Activated CD4-positive, alpha-beta memory T cell treated with anti-CD3 and anti-CD28 coated beads for 36 hours (primary cell): ENCODE measurements at regions of chr18 and their contacts with region 1.

Region 1: DNA sequence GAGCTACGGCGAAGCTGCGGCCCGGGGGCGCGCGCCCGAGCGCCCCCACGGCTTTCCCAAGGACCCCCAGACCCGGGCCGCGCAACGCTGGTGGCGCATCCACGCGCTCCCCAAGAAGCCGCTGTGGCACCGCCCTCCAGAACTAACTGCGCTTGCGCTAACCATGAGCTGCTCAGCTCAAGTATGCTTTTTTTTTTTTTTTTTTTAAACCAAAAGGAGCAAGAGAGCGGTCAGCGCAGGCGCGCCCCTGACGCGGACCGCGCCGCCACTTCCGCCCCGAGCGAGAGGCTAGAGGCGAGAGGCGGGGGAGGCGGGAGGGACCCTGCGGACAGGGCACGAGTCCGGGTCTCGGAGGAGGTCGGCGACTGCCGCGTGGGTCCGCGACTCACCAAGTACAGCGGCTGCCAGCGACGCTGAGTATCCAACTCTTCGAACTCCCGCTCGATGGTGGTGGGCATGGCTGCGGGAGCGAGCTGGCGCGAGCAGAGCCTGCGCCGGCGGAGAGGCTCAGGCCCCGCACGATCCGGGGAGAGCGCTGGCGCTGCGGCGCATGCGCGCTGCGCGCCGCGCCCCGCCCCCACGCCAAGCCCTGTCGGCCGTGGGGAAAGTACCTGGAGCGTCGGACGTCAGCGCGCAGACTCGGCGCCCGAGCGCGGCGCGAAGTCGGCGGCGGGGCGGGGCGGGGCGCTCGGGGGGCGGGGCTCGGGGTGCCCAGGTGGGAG is at the start of gene PTPN2:
- DNase-seq: peak; percentile 94
- H3K4me3 Mint-ChIP-seq: peak within 1 kb of the TSS; percentile 78
- H3K27ac Mint-ChIP-seq: peak within 1 kb of the TSS; percentile 92
- H3K4me1 Mint-ChIP-seq: peaks cover 56% of the 10 kb centered on the region
- H3K27me3 Mint-ChIP-seq: no peaks in the 10 kb centered on the region
- total RNA-seq, gene PTPN2: 68.8 to 73.3 TPM

Region 2: GRCh38 chr18:12744103-12744502 is 139.7 kb before region 1 on chr18:
- CTCF ChIA-PET with region 1: interaction called, 15 read pairs
- POLR2A ChIA-PET with region 1: interaction called, 4 read pairs
- intact Hi-C with region 1: no loop called
- DNase-seq: no peak
- H3K4me3 Mint-ChIP-seq: no peak overlapping the region
- H3K27ac Mint-ChIP-seq: no peak overlapping the region
- H3K4me1 Mint-ChIP-seq: peaks cover 4% of the 10 kb centered on the region
- H3K27me3 Mint-ChIP-seq: no peaks in the 10 kb centered on the region

Region 3: GRCh38 chr18:12838178-12838634 is 45.6 kb before region 1 on chr18:
- CTCF ChIA-PET with region 1: interaction called, 5 read pairs
- POLR2A ChIA-PET with region 1: interaction called, 17 read pairs
- intact Hi-C with region 1: loop called (anchors 1 kb)
- DNase-seq: peak; percentile 34
- H3K4me3 Mint-ChIP-seq: peak overlapping the region; percentile 45
- H3K27ac Mint-ChIP-seq: peak overlapping the region; percentile 94
- H3K4me1 Mint-ChIP-seq: peaks cover 63% of the 10 kb centered on the region
- H3K27me3 Mint-ChIP-seq: no peaks in the 10 kb centered on the region

Region 4: DNA sequence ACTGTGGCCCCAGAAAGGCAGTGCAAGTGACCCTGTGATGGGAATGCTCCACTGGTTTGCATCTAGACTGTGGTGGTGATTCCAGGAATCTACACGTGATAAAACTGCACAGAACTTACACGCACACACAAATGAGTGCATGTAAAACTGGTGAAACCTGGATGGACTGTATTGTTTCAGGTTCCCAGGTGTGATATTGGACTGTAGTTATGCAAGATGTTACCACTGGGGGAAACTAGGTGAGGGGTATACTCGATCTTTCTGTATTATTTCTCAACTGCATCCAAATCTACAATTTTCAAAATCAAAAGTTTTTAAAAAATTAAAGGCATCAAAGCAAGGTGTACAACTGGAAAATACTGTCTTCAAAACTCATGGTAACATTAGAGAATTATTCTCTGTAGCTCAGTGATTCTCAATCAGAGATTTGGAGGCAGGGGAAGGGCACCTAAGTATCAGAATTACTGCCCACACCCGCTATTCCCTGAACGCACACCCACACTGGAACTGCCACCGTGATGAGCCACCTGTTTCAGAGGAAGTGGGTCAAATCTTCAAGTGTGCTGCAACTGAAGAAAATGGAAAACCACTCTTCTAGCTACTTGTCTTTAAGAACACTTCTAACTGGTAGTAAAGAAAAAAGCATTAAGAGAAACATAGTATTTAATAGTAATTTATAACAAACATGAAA is 26.5 kb before region 1 on chr18:
- CTCF ChIA-PET with region 1: interaction called, 4 read pairs
- POLR2A ChIA-PET with region 1: interaction called, 8 read pairs
- intact Hi-C with region 1: loop called (anchors 2 kb)
- DNase-seq: peak; percentile 76
- H3K4me3 Mint-ChIP-seq: peak overlapping the region; percentile 18
- H3K27ac Mint-ChIP-seq: peak overlapping the region; percentile 84
- H3K4me1 Mint-ChIP-seq: peaks cover 64% of the 10 kb centered on the region
- H3K27me3 Mint-ChIP-seq: no peaks in the 10 kb centered on the region

Region 5: DNA sequence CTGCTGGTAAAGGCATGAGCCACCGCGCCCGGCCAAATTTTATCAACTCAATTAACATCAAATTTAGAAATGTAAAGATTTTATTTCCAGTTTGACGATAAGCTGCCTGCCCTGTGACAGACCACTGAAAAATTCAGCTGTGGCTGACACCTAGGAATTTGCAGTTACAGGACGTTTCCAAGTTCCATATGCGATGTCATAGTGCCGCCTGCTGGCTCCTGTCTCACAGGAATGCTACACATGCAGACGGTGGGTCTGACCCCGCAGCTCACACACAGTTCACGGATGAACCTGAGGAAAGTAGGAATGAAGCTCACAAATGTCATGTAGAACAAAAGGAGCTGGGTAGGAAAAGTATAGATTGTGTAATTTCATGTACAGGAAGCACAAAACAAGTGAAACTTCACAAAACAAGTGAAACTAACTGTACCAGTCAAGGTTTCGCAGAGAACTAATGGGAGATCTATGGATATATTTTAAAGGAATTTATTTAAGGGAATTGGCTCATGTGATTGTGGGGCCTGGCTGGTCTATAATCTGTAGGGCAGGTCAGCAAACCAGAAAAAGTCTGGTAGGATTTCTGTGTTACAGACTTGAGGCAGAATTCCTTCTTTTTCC is 50.7 kb after region 1 on chr18:
- CTCF ChIA-PET with region 1: interaction called, 10 read pairs
- POLR2A ChIA-PET with region 1: interaction called, 3 read pairs
- intact Hi-C with region 1: no loop called
- DNase-seq: peak; percentile 86
- H3K4me3 Mint-ChIP-seq: no peak overlapping the region
- H3K27ac Mint-ChIP-seq: no peak overlapping the region
- H3K4me1 Mint-ChIP-seq: peaks cover 4% of the 10 kb centered on the region
- H3K27me3 Mint-ChIP-seq: peaks cover 2% of the 10 kb centered on the region

Region 6: GRCh38 chr18:12990967-12991838 is 107.4 kb after region 1 on chr18 and contains the start of gene CEP192:
- CTCF ChIA-PET with region 1: no interaction called
- POLR2A ChIA-PET with region 1: interaction called, 3 read pairs
- intact Hi-C with region 1: loop called (anchors 1 kb)
- DNase-seq: peak; percentile 99
- H3K4me3 Mint-ChIP-seq: peak within 1 kb of the TSS; percentile 96
- H3K27ac Mint-ChIP-seq: peak within 1 kb of the TSS; percentile 92
- H3K4me1 Mint-ChIP-seq: peaks cover 15% of the 10 kb centered on the region
- H3K27me3 Mint-ChIP-seq: peaks cover 3% of the 10 kb centered on the region
- total RNA-seq, gene CEP192: 31.0 to 34.0 TPM